Heart right ventricle (tissue), 16 donors: ENCODE measurements at regions of chr2 and their contacts with region 1.

Region 1: DNA sequence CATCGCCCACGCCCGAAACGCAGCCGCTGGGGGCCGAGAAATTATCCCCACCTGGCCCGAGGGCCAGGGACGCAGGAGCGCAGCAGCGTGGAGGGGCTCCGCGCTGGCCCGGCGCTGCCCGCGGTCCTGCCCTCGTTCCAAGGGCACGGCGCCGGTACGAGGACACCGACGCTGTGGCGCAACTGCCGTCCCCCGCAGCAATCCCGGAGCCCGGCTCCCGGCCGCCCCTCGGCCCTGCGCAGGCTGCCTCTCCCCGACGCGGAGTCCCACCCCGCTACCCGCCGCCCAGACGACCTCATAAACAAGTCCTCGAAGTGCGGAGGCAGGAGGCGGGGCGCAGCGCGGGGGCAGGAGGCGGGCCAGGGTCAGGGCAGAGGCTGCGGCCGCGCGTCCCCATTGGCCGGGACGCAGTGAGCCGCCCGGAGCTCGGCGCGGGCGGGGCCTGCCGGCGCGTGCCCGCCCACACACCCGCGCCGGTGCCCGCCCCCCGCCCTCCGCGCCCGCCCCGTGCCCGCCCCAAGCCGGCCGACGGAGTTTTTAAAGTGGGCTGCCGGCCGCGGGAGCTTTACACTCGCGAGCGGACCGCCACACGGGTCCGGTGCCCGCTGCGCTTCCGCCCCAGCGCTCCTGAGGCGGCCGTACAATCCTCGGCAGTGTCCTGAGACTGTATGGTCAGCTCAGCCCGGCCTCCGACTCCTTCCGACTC is at the start of gene EPAS1:
- DNase-seq: peak; percentile 98
- ATAC-seq: peak; percentile 76 to 91 (median 86)
- H3K4me3 ChIP-seq: peak within 1 kb of the TSS; percentile 75 to 96 (median 90)
- H3K27ac ChIP-seq: peak within 1 kb of the TSS; percentile 95 to 100 (median 98)
- H3K4me1 ChIP-seq: peaks cover 0 to 44% (median 18%) of the 10 kb centered on the region in 9 donors
- H3K27me3 ChIP-seq: peaks cover 0 to 24% (median 0%) of the 10 kb centered on the region in 7 donors
- CTCF ChIP-seq: peak in 1 of 9 donors; percentile 7
- total RNA-seq, gene EPAS1: 176 to 415 (median 210) TPM

Region 2: DNA sequence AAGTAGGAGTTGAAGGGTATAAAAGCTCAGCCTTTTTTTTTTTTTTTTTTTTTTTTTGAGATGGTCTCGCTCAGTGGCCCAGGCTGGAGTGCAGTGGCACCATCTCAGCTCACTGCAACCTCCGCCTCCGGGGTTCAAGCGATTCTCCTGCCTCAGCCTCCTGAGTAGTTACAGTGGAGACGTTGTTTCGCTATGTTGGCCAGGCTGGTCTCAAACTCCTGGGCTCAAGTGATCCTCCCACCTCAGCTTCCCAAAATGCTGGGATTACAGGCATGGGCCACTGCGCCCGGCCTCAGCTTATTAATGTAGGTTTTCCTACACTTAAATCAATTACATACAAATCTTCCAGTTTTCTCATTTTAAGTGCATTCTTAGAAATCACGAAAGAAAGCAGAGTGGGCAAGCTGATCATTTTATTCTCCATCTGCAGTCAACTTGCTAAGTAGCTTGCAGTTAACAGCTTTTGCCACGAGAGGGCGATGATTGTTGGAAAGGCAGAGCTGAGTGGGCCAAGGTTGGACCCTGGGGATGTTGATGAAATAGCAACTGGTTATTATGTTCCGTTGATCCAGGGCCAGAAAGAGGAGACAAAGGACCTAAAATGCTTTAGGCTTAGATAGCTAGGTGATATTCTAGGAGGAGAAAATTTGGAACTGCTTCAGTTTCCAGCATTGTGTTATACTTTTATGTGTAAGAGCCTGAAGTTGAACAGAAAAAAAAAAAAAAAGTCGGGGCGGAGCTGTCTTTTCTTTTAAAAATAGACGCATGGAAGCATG is 234.2 kb before region 1 on chr2:
- intact Hi-C with region 1: loop called in 8 of 10 experiments (anchors 1 to 10 kb)
- DNase-seq: peak; percentile 53 to 94
- ATAC-seq: peak; percentile 74 to 88 (median 78)
- H3K4me3 ChIP-seq: peak overlapping the region in 1 of 10 donors; percentile 4
- H3K27ac ChIP-seq: peak overlapping the region in 9 of 10 donors; percentile 56 to 90 (median 70)
- H3K4me1 ChIP-seq: peaks cover 3 to 76% (median 33%) of the 10 kb centered on the region in 9 donors
- H3K27me3 ChIP-seq: no peaks in the 10 kb centered on the region
- CTCF ChIP-seq: peak; percentile 84 to 95 (median 90)

Region 3: GRCh38 chr2:46275973-46276372 is 21.0 kb before region 1 on chr2:
- intact Hi-C with region 1: loop called in 2 of 10 experiments (anchors 2 kb)
- DNase-seq: peak; percentile 81 to 87
- ATAC-seq: peak; percentile 75 to 84 (median 82)
- H3K4me3 ChIP-seq: peak overlapping the region in 1 of 10 donors; percentile 4
- H3K27ac ChIP-seq: peak overlapping the region; percentile 42 to 82 (median 72)
- H3K4me1 ChIP-seq: peaks cover 16 to 73% (median 47%) of the 10 kb centered on the region in 9 donors
- H3K27me3 ChIP-seq: no peaks in the 10 kb centered on the region
- CTCF ChIP-seq: peak in 2 of 9 donors; percentile 7 to 17

Region 4: GRCh38 chr2:46351750-46352138 is 54.8 kb after region 1 on chr2:
- intact Hi-C with region 1: loop called in 7 of 10 experiments (anchors 1 to 5 kb)
- DNase-seq: peak; percentile 57 to 75
- ATAC-seq: peak; percentile 48 to 87 (median 62)
- H3K4me3 ChIP-seq: peak overlapping the region in 7 of 10 donors; percentile 1 to 36 (median 22)
- H3K27ac ChIP-seq: peak overlapping the region; percentile 61 to 84 (median 76)
- H3K4me1 ChIP-seq: peaks cover 34 to 100% (median 86%) of the 10 kb centered on the region in 9 donors
- H3K27me3 ChIP-seq: no peaks in the 10 kb centered on the region
- CTCF ChIP-seq: no peak

Region 5: GRCh38 chr2:46451131-46451711 is 154.2 kb after region 1 on chr2:
- intact Hi-C with region 1: loop called in 2 of 10 experiments (anchors 5 to 10 kb)
- DNase-seq: no peak
- ATAC-seq: peak in 7 of 8 donors; percentile 25 to 89 (median 68)
- H3K4me3 ChIP-seq: no peak overlapping the region
- H3K27ac ChIP-seq: peak overlapping the region in 1 of 10 donors; percentile 17
- H3K4me1 ChIP-seq: peaks cover 0 to 13% (median 0%) of the 10 kb centered on the region in 9 donors
- H3K27me3 ChIP-seq: no peaks in the 10 kb centered on the region
- CTCF ChIP-seq: no peak